Ovary (tissue), 10 donors: ENCODE measurements at regions of chr15 and their contacts with region 1.

Region 1: GRCh38 chr15:76190834-76191538 is 120.3 kb downstream of the ETFA start:
- DNase-seq: peak; percentile 65 to 84 (median 74)
- H3K4me3 ChIP-seq: no peak overlapping the region
- H3K27ac ChIP-seq: no peak overlapping the region
- H3K4me1 ChIP-seq: peaks cover 5% of the 10 kb centered on the region
- H3K27me3 ChIP-seq: no peaks in the 10 kb centered on the region
- CTCF ChIP-seq: peak; percentile 50 to 72 (median 67)
- EP300 ChIP-seq: no peak
- POLR2A ChIP-seq: no peak

Region 2: GRCh38 chr15:75994220-75994619 is 196.8 kb before region 1 on chr15:
- intact Hi-C with region 1: no loop called
- DNase-seq: no peak
- H3K4me3 ChIP-seq: no peak overlapping the region
- H3K27ac ChIP-seq: no peak overlapping the region
- H3K4me1 ChIP-seq: no peaks in the 10 kb centered on the region
- H3K27me3 ChIP-seq: no peaks in the 10 kb centered on the region
- CTCF ChIP-seq: no peak
- EP300 ChIP-seq: no peak
- POLR2A ChIP-seq: no peak

Region 3: GRCh38 chr15:76253691-76254473 is 62.9 kb after region 1 on chr15:
- intact Hi-C with region 1: no loop called
- DNase-seq: no peak
- H3K4me3 ChIP-seq: no peak overlapping the region
- H3K27ac ChIP-seq: no peak overlapping the region
- H3K4me1 ChIP-seq: no peaks in the 10 kb centered on the region
- H3K27me3 ChIP-seq: no peaks in the 10 kb centered on the region
- CTCF ChIP-seq: no peak
- EP300 ChIP-seq: no peak
- POLR2A ChIP-seq: no peak

Region 4: DNA sequence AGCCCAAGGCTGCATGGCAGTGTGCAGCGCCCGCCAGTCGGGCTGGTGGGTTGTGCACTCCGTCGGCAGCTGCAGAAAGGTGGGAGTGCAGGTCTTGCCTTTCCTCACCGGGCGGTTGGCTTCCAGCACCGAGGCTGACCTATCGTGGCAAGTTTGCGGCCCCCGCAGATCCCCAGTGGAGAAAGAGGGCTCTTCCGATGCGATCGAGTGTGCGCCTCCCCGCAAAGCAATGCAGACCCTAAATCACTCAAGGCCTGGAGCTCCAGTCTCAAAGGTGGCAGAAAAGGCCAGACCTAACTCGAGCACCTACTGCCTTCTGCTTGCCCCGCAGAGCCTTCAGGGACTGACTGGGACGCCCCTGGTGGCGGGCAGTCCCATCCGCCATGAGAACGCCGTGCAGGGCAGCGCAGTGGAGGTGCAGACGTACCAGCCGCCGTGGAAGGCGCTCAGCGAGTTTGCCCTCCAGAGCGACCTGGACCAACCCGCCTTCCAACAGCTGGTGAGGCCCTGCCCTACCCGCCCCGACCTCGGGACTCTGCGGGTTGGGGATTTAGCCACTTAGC is 149.9 kb after region 1 on chr15:
- intact Hi-C with region 1: loop called in 1 of 4 experiments (anchors 5 kb)
- DNase-seq: no peak
- H3K4me3 ChIP-seq: no peak overlapping the region
- H3K27ac ChIP-seq: no peak overlapping the region
- H3K4me1 ChIP-seq: peaks cover 17% of the 10 kb centered on the region
- H3K27me3 ChIP-seq: peaks cover 31% of the 10 kb centered on the region
- CTCF ChIP-seq: no peak
- EP300 ChIP-seq: no peak
- POLR2A ChIP-seq: no peak